ENCODE measurements at regions of chr11 and their contacts with region 1.

Region 1: DNA sequence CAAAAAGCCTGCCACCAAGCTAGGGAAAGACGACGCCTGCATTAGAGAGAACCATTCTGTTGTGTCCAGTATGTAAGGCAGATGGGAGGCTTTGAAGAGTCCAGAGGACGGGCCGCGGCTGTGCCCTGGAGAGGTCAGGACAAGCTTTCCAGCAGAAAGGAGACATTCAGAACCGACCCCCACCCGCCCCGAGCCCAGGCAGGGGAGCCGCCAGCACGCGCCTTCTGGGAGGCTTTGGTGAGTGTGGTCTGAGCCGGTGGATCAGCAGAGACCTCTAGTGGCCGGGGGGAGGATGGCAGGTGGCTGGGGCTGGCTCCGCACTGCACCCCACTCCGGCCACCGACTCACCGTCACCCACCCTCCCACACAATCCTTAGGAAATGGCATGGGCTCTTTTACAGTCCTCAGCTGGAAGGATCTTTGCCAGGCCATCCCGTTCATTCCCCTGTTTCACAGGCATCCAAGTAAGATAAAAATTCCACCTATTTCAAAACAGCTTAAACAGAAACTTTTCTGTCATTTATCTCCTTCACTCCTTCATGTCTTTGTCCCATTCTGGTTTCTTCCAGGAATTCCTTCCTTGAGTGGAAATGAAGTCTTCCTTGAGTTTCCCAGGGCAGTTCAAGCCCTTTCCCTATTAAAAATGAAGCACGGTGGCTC is 91.2 kb downstream of the FEZ1 start:
- DNase-seq: peak; percentile 72 to 92 (median 85)
- ATAC-seq: peak; percentile 98
- H3K4me3 ChIP-seq: no peak overlapping the region
- H3K27ac ChIP-seq: no peak overlapping the region
- H3K4me1 ChIP-seq: peaks cover 0 to 7% of the 10 kb centered on the region in 2 experiments; a peak in 3 of 5 replicates
- H3K27me3 ChIP-seq: peaks cover 67 to 87% of the 10 kb centered on the region in 2 experiments
- CTCF ChIP-seq: peak; percentile 87 to 90 (median 88)
- EP300 ChIP-seq: no peak
- POLR2A ChIP-seq: no peak
- RAD21 ChIP-seq: peak; percentile 55 to 71

Region 2: GRCh38 chr11:125358254-125358840 is 46.6 kb before region 1 on chr11:
- CTCF ChIA-PET with region 1: no interaction called
- POLR2A ChIA-PET with region 1: no interaction called
- in situ Hi-C with region 1: no loop called
- intact Hi-C with region 1: loop called (anchors 10 kb)
- DNase-seq: no peak
- ATAC-seq: no peak
- H3K4me3 ChIP-seq: no peak overlapping the region
- H3K27ac ChIP-seq: no peak overlapping the region
- H3K4me1 ChIP-seq: no peaks in the 10 kb centered on the region
- H3K27me3 ChIP-seq: peaks cover 13 to 52% of the 10 kb centered on the region in 2 experiments; a peak in 4 of 5 replicates
- CTCF ChIP-seq: no peak
- EP300 ChIP-seq: no peak
- POLR2A ChIP-seq: no peak
- RAD21 ChIP-seq: no peak

Region 3: GRCh38 chr11:125376117-125376516 is 28.8 kb before region 1 on chr11:
- CTCF ChIA-PET with region 1: no interaction called
- POLR2A ChIA-PET with region 1: no interaction called
- in situ Hi-C with region 1: no loop called
- intact Hi-C with region 1: no loop called
- DNase-seq: peak in 2 of 4 experiments; percentile 8 to 20
- ATAC-seq: peak; percentile 37; the same call in 2 of the 3 replicates
- H3K4me3 ChIP-seq: no peak overlapping the region
- H3K27ac ChIP-seq: no peak overlapping the region
- H3K4me1 ChIP-seq: no peaks in the 10 kb centered on the region
- H3K27me3 ChIP-seq: peaks cover 64 to 85% of the 10 kb centered on the region in 2 experiments
- CTCF ChIP-seq: no peak
- EP300 ChIP-seq: no peak
- POLR2A ChIP-seq: no peak
- RAD21 ChIP-seq: no peak

Measured in K562 (cell line).